AG04449 (cell line): ENCODE measurements at regions of chr1 and their contacts with region 1.

Region 1: GRCh38 chr1:66996018-66996682 is 57.8 kb downstream of the SLC35D1 start:
- DNase-seq: no peak
- H3K4me3 ChIP-seq: no peak overlapping the region
- CTCF ChIP-seq: peak; percentile 83

Region 2: GRCh38 chr1:66929999-66930822 is 65.9 kb before region 1 on chr1:
- CTCF ChIA-PET with region 1: no interaction called
- POLR2A ChIA-PET with region 1: no interaction called
- DNase-seq: no peak
- H3K4me3 ChIP-seq: peak overlapping the region; percentile 78
- CTCF ChIP-seq: peak; percentile 24

Region 3: DNA sequence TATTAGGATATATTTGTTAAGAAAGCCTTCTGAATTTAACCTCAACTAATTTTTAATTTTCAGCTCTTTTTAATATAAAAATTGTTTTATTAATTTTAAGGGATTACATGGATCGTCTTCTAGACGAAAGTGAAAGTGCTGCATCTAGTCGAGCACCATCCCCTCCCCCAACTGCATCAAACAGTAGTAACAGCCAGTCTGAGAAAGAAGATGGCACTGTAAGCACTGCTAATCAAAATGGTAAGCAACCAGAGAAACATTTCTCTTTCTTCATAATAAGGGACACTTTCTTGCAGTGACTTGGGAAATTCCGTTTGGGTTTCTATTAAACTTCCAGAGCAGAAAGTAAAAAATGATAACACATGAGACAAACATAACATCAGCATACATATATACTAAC is 14.5 kb before region 1 on chr1:
- CTCF ChIA-PET with region 1: interaction called, 31 read pairs
- POLR2A ChIA-PET with region 1: no interaction called
- DNase-seq: no peak
- H3K4me3 ChIP-seq: no peak overlapping the region
- CTCF ChIP-seq: no peak

Region 4: DNA sequence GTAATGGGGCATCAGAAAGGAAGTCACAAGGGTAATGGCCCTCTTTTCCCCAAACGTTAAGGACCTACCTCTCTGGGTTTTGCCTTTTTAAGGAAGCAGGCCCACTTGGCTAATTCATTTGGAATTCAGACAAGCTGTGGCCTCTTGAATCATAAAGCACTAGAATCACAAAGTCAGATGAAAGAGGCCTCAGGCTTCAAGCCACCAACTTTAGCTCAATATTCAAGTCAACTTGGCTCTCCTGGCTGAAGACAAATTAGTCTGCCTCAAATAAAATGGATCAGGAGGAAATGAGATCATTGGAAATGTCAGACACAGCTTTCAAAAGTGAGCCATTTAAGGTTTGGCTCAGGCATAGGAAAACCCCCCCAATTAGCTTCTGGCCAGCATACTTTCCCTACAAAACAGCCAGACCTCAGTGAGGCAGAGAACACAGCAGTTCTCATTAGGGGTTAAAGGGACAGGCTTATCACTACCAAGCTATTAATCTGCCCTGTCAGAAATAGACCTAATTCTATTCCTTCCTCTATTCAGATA is 23.5 kb after region 1 on chr1:
- CTCF ChIA-PET with region 1: interaction called, 17 read pairs
- POLR2A ChIA-PET with region 1: no interaction called
- DNase-seq: peak; percentile 60
- H3K4me3 ChIP-seq: no peak overlapping the region
- CTCF ChIP-seq: no peak

Region 5: DNA sequence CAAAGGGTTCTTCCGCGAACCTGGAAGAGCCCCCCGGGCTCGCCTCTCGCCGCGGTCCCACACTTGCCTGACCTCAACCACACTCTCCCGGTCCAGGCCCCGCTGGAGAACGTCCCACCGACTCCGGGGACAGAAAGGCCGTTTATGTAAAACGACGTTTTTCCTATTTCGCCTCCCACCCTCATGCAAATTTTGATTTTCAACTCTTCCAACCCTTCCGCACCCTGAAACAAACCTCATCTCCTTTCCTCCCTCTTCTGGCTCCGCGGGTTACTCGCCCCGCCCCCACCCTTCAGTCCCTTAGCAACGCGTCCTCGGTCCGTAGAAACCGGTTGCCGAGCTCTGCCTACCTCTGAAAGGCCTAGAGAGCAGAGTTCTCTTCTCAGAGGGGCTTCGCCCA is 138.5 kb after region 1 on chr1 and contains the start of gene C1orf141:
- CTCF ChIA-PET with region 1: interaction called, 28 read pairs
- POLR2A ChIA-PET with region 1: no interaction called
- DNase-seq: no peak
- H3K4me3 ChIP-seq: peak within 1 kb of the TSS; percentile 32
- CTCF ChIP-seq: no peak